ENCODE measurements at regions of chr12 and their contacts with region 1.

Region 1: DNA sequence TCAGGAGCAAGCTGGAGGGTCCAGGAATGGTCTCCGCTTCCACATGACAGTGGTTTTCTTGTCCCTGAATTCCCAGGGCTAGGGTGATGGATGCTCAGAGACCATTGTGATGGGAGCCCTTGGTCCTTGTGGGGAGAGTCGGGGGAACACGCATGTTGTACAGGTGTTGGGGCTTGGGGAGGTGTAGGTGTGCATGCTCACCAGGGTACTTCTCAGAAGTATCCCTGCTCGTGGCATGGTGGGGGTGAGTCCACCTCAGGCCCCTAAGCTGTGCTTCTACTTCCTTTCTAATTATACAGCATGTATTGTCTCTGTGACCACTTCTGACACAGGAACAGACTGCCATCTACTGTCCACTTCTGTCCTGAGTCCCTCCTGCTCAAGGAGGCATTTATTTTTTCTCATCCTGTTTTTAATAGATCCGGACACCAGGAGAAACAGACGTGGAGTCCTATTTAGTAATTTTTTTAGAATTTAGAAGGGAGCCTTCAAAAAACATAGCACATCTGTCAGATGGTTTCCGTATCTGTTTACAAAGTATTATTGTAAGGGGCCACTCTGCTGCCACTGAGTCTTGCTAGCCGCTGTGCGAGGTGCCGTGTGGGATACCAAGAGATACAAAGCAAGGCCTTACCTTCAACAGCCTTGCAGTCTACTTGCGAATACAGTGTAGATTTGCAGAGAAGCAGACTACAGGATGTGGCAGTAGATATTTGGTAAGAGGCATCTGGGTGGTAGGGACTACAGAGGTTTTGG is 10.5 kb downstream of the NTF3 start:
- DNase-seq: peak; percentile 49
- H3K4me3 ChIP-seq: no peak overlapping the region
- H3K27ac ChIP-seq: no peak overlapping the region
- H3K4me1 ChIP-seq: no peaks in the 10 kb centered on the region
- H3K27me3 ChIP-seq: peaks cover 35 to 47% of the 10 kb centered on the region in 2 experiments
- CTCF ChIP-seq: peak; percentile 36 to 45
- POLR2A ChIP-seq: no peak

Region 2: GRCh38 chr12:5003020-5003666 is 439.3 kb before region 1 on chr12:
- CTCF ChIA-PET with region 1: no interaction called
- POLR2A ChIA-PET with region 1: no interaction called
- dilution Hi-C with region 1: no loop called
- intact Hi-C with region 1: no loop called
- DNase-seq: peak; percentile 45
- H3K4me3 ChIP-seq: no peak overlapping the region
- H3K27ac ChIP-seq: no peak overlapping the region
- H3K4me1 ChIP-seq: no peaks in the 10 kb centered on the region
- H3K27me3 ChIP-seq: no peaks in the 10 kb centered on the region
- CTCF ChIP-seq: peak; percentile 77 to 95
- POLR2A ChIP-seq: no peak

Region 3: DNA sequence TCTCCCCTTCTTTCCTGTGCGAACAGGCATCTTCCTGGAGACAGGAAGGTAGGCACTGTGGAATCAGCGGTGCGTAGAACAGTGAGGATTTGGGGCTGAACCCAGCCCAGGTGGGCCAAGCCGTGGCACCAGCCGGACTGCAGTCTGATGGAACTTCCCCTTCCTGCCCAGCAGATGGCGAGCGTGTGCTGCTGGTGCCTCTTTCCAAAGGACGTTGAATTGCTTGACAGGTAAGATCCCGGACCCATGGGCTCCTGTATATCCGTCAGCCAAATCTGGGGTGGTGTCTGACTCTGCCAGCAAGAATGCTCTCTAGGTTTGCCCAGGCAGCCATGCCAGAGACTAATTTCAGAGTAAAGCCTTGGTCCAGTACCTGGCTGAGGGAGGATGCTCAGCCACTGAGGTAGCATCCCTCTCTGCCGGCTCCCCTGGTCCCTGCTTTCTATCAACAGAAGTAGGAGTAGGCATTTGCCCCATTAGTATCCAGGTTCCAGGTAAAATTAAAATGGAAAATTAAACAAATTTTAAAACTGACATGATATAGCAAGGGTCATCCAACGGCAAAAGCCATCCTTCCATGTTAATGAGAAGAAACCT is 419.9 kb before region 1 on chr12:
- CTCF ChIA-PET with region 1: interaction called, 4 read pairs
- POLR2A ChIA-PET with region 1: no interaction called
- dilution Hi-C with region 1: no loop called
- intact Hi-C with region 1: loop called (anchors 2 kb)
- DNase-seq: peak; percentile 36
- H3K4me3 ChIP-seq: no peak overlapping the region
- H3K27ac ChIP-seq: no peak overlapping the region
- H3K4me1 ChIP-seq: no peaks in the 10 kb centered on the region
- H3K27me3 ChIP-seq: no peaks in the 10 kb centered on the region
- CTCF ChIP-seq: peak; percentile 57 to 90
- POLR2A ChIP-seq: no peak

Region 4: GRCh38 chr12:5200278-5201087 is 241.9 kb before region 1 on chr12:
- CTCF ChIA-PET with region 1: interaction called, 4 read pairs
- POLR2A ChIA-PET with region 1: no interaction called
- dilution Hi-C with region 1: no loop called
- intact Hi-C with region 1: loop called (anchors 1 kb)
- DNase-seq: peak; percentile 28
- H3K4me3 ChIP-seq: no peak overlapping the region
- H3K27ac ChIP-seq: no peak overlapping the region
- H3K4me1 ChIP-seq: no peaks in the 10 kb centered on the region
- H3K27me3 ChIP-seq: no peaks in the 10 kb centered on the region
- CTCF ChIP-seq: peak; percentile 61 to 75
- POLR2A ChIP-seq: no peak

Region 5: GRCh38 chr12:5428332-5429221 is 13.9 kb before region 1 on chr12:
- CTCF ChIA-PET with region 1: interaction called, 14 read pairs
- POLR2A ChIA-PET with region 1: no interaction called
- dilution Hi-C with region 1: no loop called
- intact Hi-C with region 1: no loop called
- DNase-seq: peak; percentile 50
- H3K4me3 ChIP-seq: no peak overlapping the region
- H3K27ac ChIP-seq: no peak overlapping the region
- H3K4me1 ChIP-seq: peaks cover 7% of the 10 kb centered on the region
- H3K27me3 ChIP-seq: peaks cover 62 to 81% of the 10 kb centered on the region in 2 experiments
- CTCF ChIP-seq: peak; percentile 39 to 53
- POLR2A ChIP-seq: no peak

Region 6: GRCh38 chr12:5459051-5459782 is 16.8 kb after region 1 on chr12:
- CTCF ChIA-PET with region 1: no interaction called
- POLR2A ChIA-PET with region 1: no interaction called
- dilution Hi-C with region 1: no loop called
- intact Hi-C with region 1: no loop called
- DNase-seq: no peak
- H3K4me3 ChIP-seq: no peak overlapping the region
- H3K27ac ChIP-seq: no peak overlapping the region
- H3K4me1 ChIP-seq: peaks cover 12% of the 10 kb centered on the region
- H3K27me3 ChIP-seq: peaks cover 0 to 1% of the 10 kb centered on the region in 2 experiments
- CTCF ChIP-seq: no peak
- POLR2A ChIP-seq: no peak